HEK293 (cell line): ENCODE measurements at regions of chr1 and their contacts with region 1.

Region 1: GRCh38 chr1:205354259-205354904 is 2.3 kb downstream of the KLHDC8A start:
- H3K4me3 ChIP-seq: no peak overlapping the region
- H3K27ac ChIP-seq: no peak overlapping the region
- H3K4me1 ChIP-seq: no peaks in the 10 kb centered on the region; the same call in 1 of the 2 replicates
- CTCF ChIP-seq: no peak; the same call in 1 of the 2 replicates

Region 2: GRCh38 chr1:205162301-205162700 is 192.1 kb before region 1 on chr1:
- CTCF ChIA-PET with region 1: no interaction called
- POLR2A ChIA-PET with region 1: no interaction called
- H3K4me3 ChIP-seq: no peak overlapping the region
- H3K27ac ChIP-seq: no peak overlapping the region
- H3K4me1 ChIP-seq: no peaks in the 10 kb centered on the region
- CTCF ChIP-seq: no peak

Region 3: DNA sequence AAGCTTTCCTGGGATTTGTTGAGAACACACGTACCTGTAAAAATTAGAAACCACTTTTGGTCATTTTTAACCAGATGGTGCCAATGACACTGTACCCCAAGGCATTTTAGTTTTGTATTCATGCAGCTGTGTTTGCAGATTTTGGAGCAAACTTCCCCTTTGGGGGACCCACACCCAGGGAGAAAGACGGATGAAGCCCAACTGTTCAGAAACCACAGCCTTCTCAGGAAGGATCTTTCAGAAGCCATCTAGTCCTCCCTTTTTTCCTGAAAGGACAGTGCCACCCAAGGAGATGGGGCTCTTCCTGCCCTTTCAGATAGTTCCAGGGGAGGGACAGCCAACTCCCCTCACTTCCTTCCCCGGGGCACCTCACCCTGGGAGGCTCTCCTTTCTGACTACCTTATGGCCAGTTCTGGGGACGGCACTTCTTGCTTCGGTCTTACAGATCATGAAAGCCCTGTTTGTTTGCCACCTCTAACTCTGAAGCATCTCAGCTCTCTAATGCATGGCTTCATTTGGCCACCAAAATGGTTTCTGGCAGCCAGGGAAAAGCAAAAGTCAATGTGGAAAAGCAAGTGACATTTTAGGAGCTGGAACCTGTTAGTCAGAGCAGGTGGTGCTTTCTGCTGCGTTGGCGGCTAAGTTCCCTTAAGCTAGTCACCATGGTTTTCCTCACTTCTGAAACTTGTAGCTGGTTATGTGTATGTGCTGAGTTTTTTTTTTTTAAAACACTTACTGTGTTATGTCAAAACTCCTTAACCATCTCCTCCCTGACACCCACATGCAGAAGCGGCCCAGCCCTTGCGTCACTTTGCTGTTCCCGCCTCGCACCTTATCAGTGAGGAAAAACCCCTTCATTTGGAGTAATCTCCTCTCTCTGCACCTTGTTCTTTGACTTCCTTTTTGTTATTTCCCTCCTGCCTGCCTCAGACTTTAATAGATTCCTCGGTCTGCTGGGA is 116.6 kb before region 1 on chr1:
- CTCF ChIA-PET with region 1: no interaction called
- POLR2A ChIA-PET with region 1: no interaction called
- H3K4me3 ChIP-seq: no peak overlapping the region
- H3K27ac ChIP-seq: no peak overlapping the region
- H3K4me1 ChIP-seq: no peaks in the 10 kb centered on the region
- CTCF ChIP-seq: no peak

Region 4: DNA sequence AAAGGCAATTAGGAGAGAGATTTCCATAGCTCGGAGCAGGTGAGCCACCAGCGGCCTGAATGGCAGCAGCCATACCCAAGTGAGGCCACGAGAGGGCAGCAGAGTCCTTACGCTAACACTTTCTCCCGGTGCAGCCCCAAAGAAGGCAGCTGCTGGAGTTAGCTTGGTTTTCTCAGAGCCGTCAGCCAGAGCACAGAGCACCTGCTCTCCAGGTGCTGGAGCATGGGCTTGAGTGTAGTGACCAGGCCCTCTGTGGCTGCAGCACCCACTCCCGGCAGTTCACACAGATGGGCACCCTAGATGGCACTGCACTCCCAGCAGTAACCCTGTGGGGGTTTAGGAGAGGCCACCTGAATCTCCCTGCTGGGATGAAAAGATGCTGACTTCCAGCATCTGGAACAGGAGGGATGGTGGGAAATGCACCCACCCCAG is 80.8 kb before region 1 on chr1:
- CTCF ChIA-PET with region 1: interaction called, 23 read pairs
- POLR2A ChIA-PET with region 1: interaction called, 4 read pairs
- H3K4me3 ChIP-seq: no peak overlapping the region
- H3K27ac ChIP-seq: no peak overlapping the region
- H3K4me1 ChIP-seq: no peaks in the 10 kb centered on the region
- CTCF ChIP-seq: peak; percentile 93

Region 5: DNA sequence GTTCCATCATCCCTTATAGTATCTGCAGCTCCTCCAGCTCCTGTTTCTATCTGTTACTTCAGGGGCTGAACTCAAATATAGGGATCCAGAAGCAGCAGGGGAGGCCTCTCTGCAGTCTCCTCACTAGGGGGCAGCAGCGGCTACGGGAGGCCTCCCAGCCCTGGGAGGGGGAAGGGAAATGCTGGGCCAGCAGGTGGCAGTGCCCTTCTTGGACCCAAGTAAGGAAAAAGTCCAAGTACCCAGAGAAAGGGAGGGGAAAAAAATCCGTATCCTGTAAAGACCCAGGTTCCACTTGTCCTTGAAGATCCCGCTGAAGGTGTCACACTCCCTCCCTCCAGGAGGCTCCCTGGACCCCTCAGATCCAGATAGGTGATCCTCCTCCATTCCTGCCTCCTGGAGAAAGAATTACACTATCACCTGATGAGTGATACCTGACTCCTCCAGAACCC is 18.7 kb before region 1 on chr1:
- CTCF ChIA-PET with region 1: interaction called, 80 read pairs
- POLR2A ChIA-PET with region 1: interaction called, 3 read pairs
- H3K4me3 ChIP-seq: no peak overlapping the region
- H3K27ac ChIP-seq: no peak overlapping the region
- H3K4me1 ChIP-seq: 0 out of 2 replicates have a peak, but pooled peaks cover 2% of the 10 kb centered on the region
- CTCF ChIP-seq: peak; percentile 97

Region 6: DNA sequence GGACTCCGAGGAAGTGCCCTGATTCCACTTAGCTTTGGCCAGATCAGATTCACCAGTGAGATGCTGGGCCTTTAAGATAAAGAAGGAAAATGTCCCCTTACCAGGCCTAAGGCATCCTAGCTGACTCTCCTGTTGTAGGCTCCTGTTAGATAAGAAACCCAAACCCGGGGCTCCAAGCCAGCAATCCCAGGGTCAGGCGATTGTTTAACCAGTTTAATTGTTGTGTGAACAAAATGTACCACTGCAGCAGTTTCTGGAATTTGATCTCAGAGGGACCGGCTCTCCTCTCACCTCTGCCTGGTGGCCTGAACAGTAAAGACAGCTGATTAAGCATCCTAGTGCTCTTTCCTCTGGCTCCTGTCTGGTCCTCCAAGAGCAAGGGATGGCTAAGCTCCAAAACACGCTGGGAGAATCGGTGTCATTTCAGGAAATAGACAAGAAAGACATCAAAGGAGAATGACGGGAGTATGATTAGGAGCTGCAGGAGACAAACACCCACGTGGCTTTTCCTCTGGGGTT is 11.6 kb after region 1 on chr1:
- CTCF ChIA-PET with region 1: interaction called, 32 read pairs
- POLR2A ChIA-PET with region 1: interaction called, 3 read pairs
- H3K4me3 ChIP-seq: no peak overlapping the region
- H3K27ac ChIP-seq: no peak overlapping the region
- H3K4me1 ChIP-seq: no peaks in the 10 kb centered on the region
- CTCF ChIP-seq: no peak

Region 7: DNA sequence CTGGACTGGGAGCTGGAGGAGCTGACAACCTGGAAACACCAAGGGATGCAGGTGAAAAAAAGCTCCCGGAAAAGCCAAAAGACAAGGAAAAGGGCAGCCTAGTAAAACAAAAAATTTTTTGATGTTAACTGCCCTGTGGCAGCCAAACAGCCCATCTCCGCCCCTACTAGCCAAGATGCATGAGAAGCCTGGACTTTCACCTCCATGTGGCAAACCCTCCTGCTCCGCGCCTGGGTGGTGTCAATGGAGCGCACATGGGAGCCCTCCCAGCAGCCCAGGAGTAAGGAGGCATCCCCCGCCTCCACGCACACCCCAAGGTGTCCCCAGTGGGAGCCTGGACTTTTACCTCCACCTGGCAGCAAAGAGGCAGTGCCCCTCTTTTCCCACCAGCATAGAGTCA is 37.0 kb after region 1 on chr1:
- CTCF ChIA-PET with region 1: interaction called, 40 read pairs
- POLR2A ChIA-PET with region 1: no interaction called
- H3K4me3 ChIP-seq: no peak overlapping the region
- H3K27ac ChIP-seq: no peak overlapping the region
- H3K4me1 ChIP-seq: no peaks in the 10 kb centered on the region
- CTCF ChIP-seq: no peak

Region 8: GRCh38 chr1:205430696-205431305 is 76.4 kb after region 1 on chr1:
- CTCF ChIA-PET with region 1: interaction called, 27 read pairs
- POLR2A ChIA-PET with region 1: no interaction called
- H3K4me3 ChIP-seq: peak overlapping the region; percentile 46
- H3K27ac ChIP-seq: no peak overlapping the region
- H3K4me1 ChIP-seq: 0 out of 2 replicates have a peak, but pooled peaks cover 2% of the 10 kb centered on the region
- CTCF ChIP-seq: peak; percentile 93

Region 9: DNA sequence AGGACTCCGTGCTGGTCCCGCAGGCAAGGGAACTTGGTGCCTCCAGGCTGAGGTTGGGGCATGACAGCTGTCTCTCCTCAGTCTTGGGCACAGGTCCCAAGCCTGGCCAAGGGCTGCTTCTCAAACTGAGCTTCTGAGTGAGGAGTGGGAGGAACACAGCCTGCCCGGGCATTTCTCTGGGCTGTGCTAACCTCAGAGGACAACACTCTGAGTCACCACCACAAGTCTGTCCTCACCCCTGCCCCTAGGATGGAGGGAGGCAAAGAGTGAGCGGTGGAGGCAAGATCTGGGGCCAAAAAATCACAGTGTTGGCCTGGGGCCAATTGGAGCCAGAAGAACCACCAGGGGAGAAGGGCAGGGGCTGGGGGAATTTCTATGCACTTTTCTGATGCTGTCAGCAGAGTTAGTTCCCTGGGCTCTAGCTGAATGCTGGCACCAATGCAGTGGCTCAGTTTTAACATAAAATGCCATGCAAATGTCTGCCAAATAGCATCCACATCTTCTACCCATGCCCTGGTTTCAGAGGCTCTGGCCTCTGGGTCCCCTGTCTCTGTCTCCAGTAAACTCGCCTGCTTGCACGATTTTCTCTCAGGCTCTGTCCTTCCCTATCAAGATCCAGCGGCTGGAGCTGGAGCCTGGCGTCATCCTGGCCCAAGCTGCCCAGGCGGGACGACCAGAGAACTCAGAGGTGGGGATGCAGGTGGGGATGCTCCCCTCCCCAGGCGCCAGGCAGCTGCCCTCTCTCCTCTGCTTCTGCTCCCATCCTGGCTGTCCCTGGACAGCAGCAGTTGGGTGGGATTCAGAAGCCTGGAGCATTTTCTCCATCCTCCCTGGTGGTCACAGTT is 139.1 kb after region 1 on chr1:
- CTCF ChIA-PET with region 1: interaction called, 17 read pairs
- POLR2A ChIA-PET with region 1: no interaction called
- H3K4me3 ChIP-seq: no peak overlapping the region
- H3K27ac ChIP-seq: no peak overlapping the region; the same call in 1 of the 2 replicates
- H3K4me1 ChIP-seq: peaks cover 16% of the 10 kb centered on the region
- CTCF ChIP-seq: no peak